ENCODE measurements at regions of chr7 and their contacts with region 1.

Region 1: DNA sequence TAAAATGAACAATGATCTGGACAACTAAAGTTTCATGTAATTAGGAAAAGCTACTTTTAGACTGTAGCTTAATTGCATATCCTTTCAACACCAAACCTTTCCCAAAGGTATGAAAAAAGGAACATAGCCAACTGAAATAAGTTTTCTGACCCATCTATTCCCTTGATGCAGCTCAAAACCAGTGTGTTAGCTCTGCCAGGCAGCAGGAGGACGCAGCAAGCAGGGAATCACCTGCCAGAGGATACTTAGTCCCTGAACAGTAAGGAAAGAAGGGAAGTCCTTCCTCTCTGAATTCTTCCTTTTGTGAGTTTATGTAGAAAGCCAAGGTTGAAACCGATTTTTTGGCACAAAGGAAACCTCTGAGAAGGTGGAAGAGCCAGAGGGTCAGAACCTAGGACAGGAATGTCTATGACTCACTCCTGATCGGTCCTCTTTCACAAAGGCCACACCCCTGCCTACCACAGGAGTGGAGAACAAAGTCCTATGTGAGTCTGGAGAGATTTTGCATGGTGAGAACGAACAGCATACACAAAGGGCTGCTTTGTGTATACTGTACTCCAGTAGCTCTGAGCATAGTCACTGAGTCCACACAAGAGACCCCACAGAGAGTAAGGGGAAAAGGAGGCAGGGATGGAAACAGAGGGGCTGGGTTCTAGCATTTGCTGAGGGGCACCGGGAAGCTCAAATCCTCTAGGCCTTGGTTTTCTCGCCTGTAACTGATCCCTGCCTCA is 68.8 kb upstream of the GSDME start:
- DNase-seq: peak; percentile 99
- ATAC-seq: peak; percentile 100
- H3K4me3 ChIP-seq: peak overlapping the region in 1 of 3 experiments; percentile 36; a peak in 3 of 6 replicates
- H3K27ac ChIP-seq: peak overlapping the region; percentile 75
- H3K4me1 ChIP-seq: peaks cover 40% of the 10 kb centered on the region
- H3K27me3 ChIP-seq: no peaks in the 10 kb centered on the region
- CTCF ChIP-seq: 0 out of 2 replicates have a peak, but pooled peaks have one; percentile 13
- EP300 ChIP-seq: peak; percentile 17 to 81; a peak in 2 of 4 replicates
- POLR2A ChIP-seq: peak in 1 of 2 experiments; percentile 41; a peak in 1 of 4 replicates
- RAD21 ChIP-seq: no peak

Region 2: GRCh38 chr7:24545215-24545614 is 280.9 kb before region 1 on chr7:
- CTCF ChIA-PET with region 1: no interaction called
- POLR2A ChIA-PET with region 1: no interaction called
- in situ Hi-C with region 1: no loop called
- intact Hi-C with region 1: no loop called
- DNase-seq: no peak
- ATAC-seq: no peak
- H3K4me3 ChIP-seq: no peak overlapping the region
- H3K27ac ChIP-seq: no peak overlapping the region
- H3K4me1 ChIP-seq: no peaks in the 10 kb centered on the region
- H3K27me3 ChIP-seq: no peaks in the 10 kb centered on the region
- CTCF ChIP-seq: no peak
- EP300 ChIP-seq: no peak
- POLR2A ChIP-seq: no peak
- RAD21 ChIP-seq: no peak

Region 3: DNA sequence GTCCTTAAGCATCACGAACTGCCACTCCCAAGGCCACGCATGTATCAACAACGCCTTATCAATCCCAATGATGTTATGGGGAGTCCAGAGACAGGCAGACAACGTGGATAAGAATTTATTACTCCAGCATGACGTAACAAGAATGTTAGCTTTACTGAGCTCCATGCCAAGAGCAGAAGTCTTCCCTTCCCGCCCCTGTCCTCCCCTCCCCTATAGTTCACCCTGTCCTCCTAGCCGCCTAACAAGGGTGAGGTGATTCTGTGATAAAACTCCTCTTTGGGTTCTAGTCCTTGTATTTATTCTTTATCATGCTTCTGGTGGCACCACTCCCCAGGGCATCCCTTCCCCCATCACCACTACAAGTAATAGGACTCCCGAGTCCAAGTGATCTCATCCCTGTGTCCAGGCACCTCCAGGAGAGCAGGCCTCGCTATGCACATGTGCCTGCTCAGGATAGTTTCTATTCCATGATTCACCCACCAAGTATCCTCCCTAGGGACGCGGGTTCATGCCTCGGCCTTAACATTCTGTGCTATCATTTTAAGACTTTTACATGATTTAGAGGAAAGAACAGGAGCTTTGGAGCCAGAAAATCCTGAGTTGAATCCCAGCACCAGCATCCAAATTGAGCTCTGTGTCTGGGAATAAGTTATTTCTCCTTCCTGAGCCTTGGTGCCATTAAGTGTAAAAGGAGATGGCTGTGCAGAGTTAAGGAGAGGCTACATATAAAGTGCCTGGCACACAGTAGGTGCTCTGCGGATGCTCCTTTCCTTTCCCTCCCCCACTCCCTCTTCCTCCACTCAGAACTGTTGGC is 84.2 kb before region 1 on chr7:
- CTCF ChIA-PET with region 1: no interaction called
- POLR2A ChIA-PET with region 1: no interaction called
- in situ Hi-C with region 1: no loop called
- intact Hi-C with region 1: no loop called
- DNase-seq: no peak
- ATAC-seq: no peak
- H3K4me3 ChIP-seq: no peak overlapping the region
- H3K27ac ChIP-seq: no peak overlapping the region
- H3K4me1 ChIP-seq: no peaks in the 10 kb centered on the region
- H3K27me3 ChIP-seq: no peaks in the 10 kb centered on the region
- CTCF ChIP-seq: no peak
- EP300 ChIP-seq: no peak
- POLR2A ChIP-seq: no peak
- RAD21 ChIP-seq: no peak

Region 4: GRCh38 chr7:24786941-24787340 is 39.2 kb before region 1 on chr7:
- CTCF ChIA-PET with region 1: no interaction called
- POLR2A ChIA-PET with region 1: no interaction called
- in situ Hi-C with region 1: no loop called
- intact Hi-C with region 1: no loop called
- DNase-seq: no peak
- ATAC-seq: no peak
- H3K4me3 ChIP-seq: no peak overlapping the region
- H3K27ac ChIP-seq: no peak overlapping the region
- H3K4me1 ChIP-seq: peaks cover 10% of the 10 kb centered on the region; the same call in 1 of the 2 replicates
- H3K27me3 ChIP-seq: no peaks in the 10 kb centered on the region
- CTCF ChIP-seq: no peak
- EP300 ChIP-seq: no peak
- POLR2A ChIP-seq: no peak
- RAD21 ChIP-seq: no peak

Region 5: GRCh38 chr7:24842449-24843241 is 16.5 kb after region 1 on chr7:
- CTCF ChIA-PET with region 1: interaction called, 3 read pairs
- POLR2A ChIA-PET with region 1: interaction called, 3 read pairs
- in situ Hi-C with region 1: no loop called
- intact Hi-C with region 1: loop called (anchors 2 kb)
- DNase-seq: peak; percentile 93
- ATAC-seq: peak; percentile 92
- H3K4me3 ChIP-seq: no peak overlapping the region
- H3K27ac ChIP-seq: peak overlapping the region; percentile 47
- H3K4me1 ChIP-seq: peaks cover 45% of the 10 kb centered on the region
- H3K27me3 ChIP-seq: no peaks in the 10 kb centered on the region
- CTCF ChIP-seq: no peak
- EP300 ChIP-seq: peak in 1 of 2 experiments; percentile 67; a peak in 2 of 4 replicates
- POLR2A ChIP-seq: no peak
- RAD21 ChIP-seq: no peak

Region 6: GRCh38 chr7:25125137-25125946 is 299.2 kb after region 1 on chr7 and contains the start of gene CYCS:
- CTCF ChIA-PET with region 1: no interaction called
- POLR2A ChIA-PET with region 1: interaction called, 14 read pairs
- in situ Hi-C with region 1: no loop called
- intact Hi-C with region 1: no loop called
- DNase-seq: peak; percentile 98
- ATAC-seq: peak; percentile 96
- H3K4me3 ChIP-seq: peak within 1 kb of the TSS; percentile 83 to 87 (median 85)
- H3K27ac ChIP-seq: peak within 1 kb of the TSS; percentile 81
- H3K4me1 ChIP-seq: peaks cover 15% of the 10 kb centered on the region
- H3K27me3 ChIP-seq: no peaks in the 10 kb centered on the region; a peak in 2 of 5 replicates
- CTCF ChIP-seq: no peak
- EP300 ChIP-seq: peak; percentile 25 to 56; a peak in 2 of 4 replicates
- POLR2A ChIP-seq: peak; percentile 99
- RAD21 ChIP-seq: peak; percentile 27
- total RNA-seq, gene CYCS: 202 and 328 TPM in 2 replicates

Measured in HepG2 (cell line).